ENCODE measurements at regions of chr4 and their contacts with region 1.

Region 1: GRCh38 chr4:176838611-176839433 is 46.1 kb upstream of the VEGFC start:
- DNase-seq: peak; percentile 77
- H3K4me3 ChIP-seq: no peak overlapping the region
- H3K27ac ChIP-seq: peak overlapping the region; percentile 71
- H3K4me1 ChIP-seq: peaks cover 74% of the 10 kb centered on the region
- H3K27me3 ChIP-seq: no peaks in the 10 kb centered on the region
- CTCF ChIP-seq: no peak
- POLR2A ChIP-seq: no peak

Region 2: DNA sequence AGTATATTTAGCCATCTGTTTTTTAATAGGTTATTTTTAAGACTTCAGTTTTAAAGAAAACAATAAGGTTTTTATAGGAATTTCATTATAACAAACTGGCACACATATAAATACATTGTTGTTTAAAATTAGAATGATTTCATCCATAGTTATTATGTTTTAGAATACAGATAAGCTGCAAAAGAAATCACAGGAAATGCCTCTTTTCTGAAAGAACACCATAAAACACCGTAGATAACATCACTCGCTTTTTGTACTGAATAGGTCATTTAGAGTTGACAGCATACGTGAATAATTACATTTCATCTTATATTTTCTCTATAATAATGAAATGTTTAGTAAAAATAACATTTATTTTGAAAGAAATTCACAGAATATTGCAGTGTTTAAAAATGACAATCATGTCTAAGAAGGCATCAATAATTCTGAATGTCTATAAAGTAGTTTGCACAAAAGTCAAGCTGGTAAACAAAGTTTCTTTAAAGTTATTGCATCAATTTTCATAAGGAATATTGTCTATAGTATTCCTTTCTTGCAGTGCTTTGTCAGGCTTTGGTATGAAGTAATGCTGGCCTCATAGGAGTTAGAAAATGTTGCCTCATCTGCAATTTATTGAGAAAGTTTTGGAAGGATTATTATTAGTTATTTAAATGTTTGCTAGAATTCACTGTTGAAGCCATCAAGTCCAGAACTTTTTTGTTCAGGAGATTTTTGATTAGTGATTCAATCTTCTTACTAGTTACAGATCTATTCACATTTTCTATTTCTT is 28.2 kb before region 1 on chr4:
- CTCF ChIA-PET with region 1: no interaction called
- POLR2A ChIA-PET with region 1: no interaction called
- dilution Hi-C with region 1: no loop called
- intact Hi-C with region 1: loop called (anchors 1 kb)
- DNase-seq: peak; percentile 73
- H3K4me3 ChIP-seq: no peak overlapping the region
- H3K27ac ChIP-seq: peak overlapping the region; percentile 44
- H3K4me1 ChIP-seq: peaks cover 21% of the 10 kb centered on the region
- H3K27me3 ChIP-seq: no peaks in the 10 kb centered on the region
- CTCF ChIP-seq: no peak
- POLR2A ChIP-seq: no peak

Region 3: GRCh38 chr4:176988226-176988625 is 149.4 kb after region 1 on chr4:
- CTCF ChIA-PET with region 1: no interaction called
- POLR2A ChIA-PET with region 1: no interaction called
- dilution Hi-C with region 1: no loop called
- intact Hi-C with region 1: loop called (anchors 5 kb)
- DNase-seq: peak; percentile 92
- H3K4me3 ChIP-seq: no peak overlapping the region
- H3K27ac ChIP-seq: peak overlapping the region; percentile 55
- H3K4me1 ChIP-seq: peaks cover 5% of the 10 kb centered on the region
- H3K27me3 ChIP-seq: no peaks in the 10 kb centered on the region
- CTCF ChIP-seq: no peak
- POLR2A ChIP-seq: no peak

Measured in endothelial cell of umbilical vein (primary cell).